ENCODE measurements at regions of chr15 and their contacts with region 1.

Region 1: DNA sequence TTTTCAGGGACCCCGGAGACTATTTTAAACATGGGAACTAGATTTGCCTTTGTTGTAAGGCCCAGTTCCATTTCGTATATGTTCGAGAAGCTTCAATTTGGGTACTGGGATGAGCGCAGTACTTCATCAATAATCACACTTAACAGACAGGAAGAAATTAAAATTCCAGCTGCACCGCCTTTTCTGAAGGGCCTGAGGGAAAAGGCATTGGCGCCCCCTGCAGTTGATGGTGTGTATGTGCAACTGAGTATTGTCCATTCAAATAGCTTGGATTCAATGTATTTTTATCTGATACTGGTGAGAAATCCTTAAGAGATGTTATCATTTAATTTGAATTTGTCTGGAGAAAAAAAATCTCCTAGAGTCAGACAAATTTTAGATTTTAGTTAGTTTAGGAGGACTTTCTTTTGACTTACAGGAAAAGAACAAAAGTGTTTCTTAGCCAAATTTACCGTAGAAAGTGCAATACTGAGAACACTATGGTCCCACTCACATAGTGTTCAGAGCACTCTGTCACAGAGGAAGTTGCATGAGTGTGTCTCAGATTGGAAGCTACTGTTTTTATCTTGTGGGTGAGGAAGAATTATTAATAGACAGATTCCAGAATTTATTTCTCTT is 5.4 kb upstream of the ALDH1A2 start:
- DNase-seq: peak; percentile 83
- H3K4me3 Mint-ChIP-seq: no peak overlapping the region
- H3K27ac Mint-ChIP-seq: no peak overlapping the region
- H3K4me1 Mint-ChIP-seq: peaks cover 4% of the 10 kb centered on the region
- H3K27me3 Mint-ChIP-seq: peaks cover 55% of the 10 kb centered on the region

Region 2: GRCh38 chr15:57866149-57866736 is 204.7 kb before region 1 on chr15:
- intact Hi-C with region 1: loop called (anchors 2 kb)
- DNase-seq: peak; percentile 89
- H3K4me3 Mint-ChIP-seq: no peak overlapping the region
- H3K27ac Mint-ChIP-seq: no peak overlapping the region
- H3K4me1 Mint-ChIP-seq: peaks cover 12% of the 10 kb centered on the region
- H3K27me3 Mint-ChIP-seq: peaks cover 47% of the 10 kb centered on the region